ENCODE measurements at regions of chr4 and their contacts with region 1.

Region 1: GRCh38 chr4:145154573-145154972 is 25.8 kb downstream of the OTUD4 start:
- DNase-seq: no peak
- ATAC-seq: no peak
- H3K4me3 ChIP-seq: no peak overlapping the region
- H3K27ac ChIP-seq: no peak overlapping the region
- H3K4me1 ChIP-seq: no peaks in the 10 kb centered on the region
- H3K27me3 ChIP-seq: no peaks in the 10 kb centered on the region

Region 2: DNA sequence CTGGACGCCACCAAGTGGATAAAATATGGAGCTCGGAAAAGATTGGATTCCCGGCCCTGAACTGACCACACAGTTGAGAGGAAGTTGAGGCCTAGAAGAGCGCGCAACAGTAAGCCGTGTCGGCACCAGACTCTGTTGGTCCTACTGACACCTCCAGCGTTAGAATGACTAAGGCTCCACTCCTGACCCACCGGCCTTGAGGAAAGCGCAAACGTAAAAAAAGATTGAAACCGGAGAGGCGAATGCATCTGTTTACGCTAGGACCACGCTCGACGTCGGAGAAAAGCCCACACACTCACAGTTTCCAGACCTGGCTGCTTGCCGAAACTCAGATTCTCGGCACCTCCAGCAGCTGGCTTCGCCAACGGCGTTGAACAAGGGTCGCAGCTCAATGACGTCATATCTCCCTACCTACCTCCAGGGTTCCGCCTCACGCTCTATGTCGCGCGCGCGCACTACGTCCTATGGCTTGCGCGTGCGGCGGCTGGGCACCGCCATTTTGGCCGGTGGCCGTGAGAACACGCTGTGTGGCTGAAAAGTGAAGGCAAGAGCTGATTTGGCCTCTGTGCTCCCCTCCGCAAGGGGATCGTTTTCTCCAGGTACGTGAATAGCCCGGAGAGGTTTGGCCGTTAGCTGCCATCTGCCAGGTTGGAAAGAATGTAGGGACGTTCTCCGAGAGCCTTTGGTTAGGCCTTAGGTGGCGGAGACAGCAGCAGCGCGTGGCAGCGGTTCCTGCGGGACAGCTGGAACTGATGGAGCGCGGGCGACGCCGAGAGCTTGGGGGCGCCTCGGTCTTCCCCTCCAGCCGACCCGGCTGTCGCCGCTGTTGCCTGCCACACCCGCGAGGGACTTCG is 56.5 kb before region 1 on chr4 and contains the starts of genes ABCE1 and ANAPC10:
- intact Hi-C with region 1: loop called in 1 of 2 experiments (anchors 10 kb)
- DNase-seq: peak; percentile 97 to 98
- ATAC-seq: peak; percentile 99
- H3K4me3 ChIP-seq: peak within 1 kb of the TSS; percentile 64 to 79
- H3K27ac ChIP-seq: peak within 1 kb of the TSS; percentile 73 to 76
- H3K4me1 ChIP-seq: peaks cover 2% of the 10 kb centered on the region in 2 donors
- H3K27me3 ChIP-seq: no peaks in the 10 kb centered on the region
- total RNA-seq, gene ABCE1: 39.2 to 43.9 TPM
- total RNA-seq, gene ANAPC10: 20.2 to 22.8 TPM

Region 3: DNA sequence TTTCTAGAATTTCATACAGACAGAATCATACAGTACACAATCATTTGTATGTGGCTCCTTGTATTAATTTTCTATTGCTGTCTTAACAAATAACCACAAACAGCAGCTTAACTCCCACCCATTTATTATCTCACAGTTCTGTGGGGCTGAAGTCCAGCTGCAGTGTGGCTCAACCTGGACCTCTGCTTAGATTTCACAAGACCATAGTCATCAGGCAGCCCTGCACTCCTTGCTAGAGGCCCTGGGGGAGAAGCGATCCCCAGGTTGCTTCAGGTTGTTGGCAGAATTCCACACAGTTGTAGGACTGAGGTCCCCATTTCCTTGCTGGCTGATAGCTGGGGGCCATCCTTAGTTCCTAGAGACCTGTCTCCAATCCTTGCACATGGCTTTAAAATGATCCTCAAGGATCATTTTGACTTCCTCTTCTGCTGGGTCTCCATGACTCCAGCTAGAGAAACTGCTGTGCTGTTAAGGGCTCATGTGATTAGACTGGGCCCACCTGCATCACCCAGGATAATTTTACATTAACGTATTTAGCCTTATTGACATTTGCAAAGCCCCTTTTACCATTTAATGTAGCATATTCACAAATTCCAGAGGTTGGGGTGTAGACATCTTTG is 266.1 kb after region 1 on chr4:
- intact Hi-C with region 1: no loop called
- DNase-seq: no peak
- ATAC-seq: no peak
- H3K4me3 ChIP-seq: no peak overlapping the region
- H3K27ac ChIP-seq: no peak overlapping the region
- H3K4me1 ChIP-seq: no peaks in the 10 kb centered on the region
- H3K27me3 ChIP-seq: no peaks in the 10 kb centered on the region

Measured in aorta (tissue), 5 donors.